Naive thymus-derived CD4-positive, alpha-beta T cell (primary cell): ENCODE measurements at regions of chr9 and their contacts with region 1.

Region 1: DNA sequence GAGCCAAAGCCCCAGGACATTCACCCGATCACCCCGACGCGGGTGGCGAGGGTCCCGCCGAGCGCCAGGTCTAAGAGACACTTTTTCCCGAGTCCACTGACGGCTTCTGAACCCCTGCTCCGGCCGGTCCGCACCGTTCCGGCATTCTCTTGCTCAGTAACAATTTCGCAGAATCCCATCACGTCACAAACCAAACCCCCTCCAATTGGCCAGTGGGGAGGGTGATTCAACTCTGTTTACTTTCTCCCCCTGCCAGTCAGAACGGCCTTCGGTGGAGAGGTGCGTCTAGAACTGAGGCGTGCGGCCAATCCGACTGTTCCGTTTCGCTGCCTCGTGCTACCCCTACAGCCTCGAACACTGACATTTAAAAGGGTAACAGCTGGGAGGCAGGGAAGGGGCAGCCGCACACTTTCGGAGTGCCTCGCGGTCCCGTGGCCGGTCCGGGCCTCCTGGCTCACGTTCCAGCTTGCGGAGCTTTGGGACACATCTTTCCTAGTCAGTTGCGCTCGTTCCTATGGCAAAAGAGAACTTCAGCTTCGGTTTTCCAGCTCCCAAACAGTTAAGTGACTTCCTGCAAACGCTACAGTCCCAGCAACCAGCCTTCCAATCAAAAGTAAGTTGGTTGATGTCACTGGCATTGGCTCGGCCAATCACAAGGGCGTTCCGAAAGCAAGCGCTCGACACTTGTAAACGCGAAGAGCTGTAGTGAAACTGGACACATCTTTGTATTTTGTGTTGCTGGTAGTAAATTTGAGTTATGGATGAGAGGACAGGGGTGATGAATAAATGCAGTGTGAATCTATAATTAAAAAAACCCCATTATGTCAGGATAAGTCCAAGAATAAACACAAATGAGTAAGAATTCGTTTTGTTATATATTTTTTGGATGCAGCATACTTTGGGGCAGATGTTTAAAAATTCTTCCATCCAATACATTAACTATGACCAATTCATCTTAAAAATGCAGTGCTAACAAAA is at the start of gene KLF9:
- DNase-seq: peak; percentile 76 to 97 (median 96)
- ATAC-seq: peak; percentile 89
- H3K4me3 ChIP-seq: peak within 1 kb of the TSS; percentile 42
- H3K4me3 Mint-ChIP-seq: peak within 1 kb of the TSS; percentile 91 to 100 (median 96)
- H3K27ac ChIP-seq: peak within 1 kb of the TSS; percentile 99
- H3K27ac Mint-ChIP-seq: peak within 1 kb of the TSS; percentile 99 to 100 (median 100)
- H3K4me1 ChIP-seq: peaks cover 37 to 39% of the 10 kb centered on the region in 2 donors
- H3K4me1 Mint-ChIP-seq: peaks cover 12 to 63% (median 45%) of the 10 kb centered on the region in 7 donors
- H3K27me3 ChIP-seq: no peaks in the 10 kb centered on the region
- H3K27me3 Mint-ChIP-seq: peaks cover 0 to 3% (median 0%) of the 10 kb centered on the region in 5 donors
- total RNA-seq, gene KLF9: 12.6 to 96.7 (median 23.3) TPM

Region 2: DNA sequence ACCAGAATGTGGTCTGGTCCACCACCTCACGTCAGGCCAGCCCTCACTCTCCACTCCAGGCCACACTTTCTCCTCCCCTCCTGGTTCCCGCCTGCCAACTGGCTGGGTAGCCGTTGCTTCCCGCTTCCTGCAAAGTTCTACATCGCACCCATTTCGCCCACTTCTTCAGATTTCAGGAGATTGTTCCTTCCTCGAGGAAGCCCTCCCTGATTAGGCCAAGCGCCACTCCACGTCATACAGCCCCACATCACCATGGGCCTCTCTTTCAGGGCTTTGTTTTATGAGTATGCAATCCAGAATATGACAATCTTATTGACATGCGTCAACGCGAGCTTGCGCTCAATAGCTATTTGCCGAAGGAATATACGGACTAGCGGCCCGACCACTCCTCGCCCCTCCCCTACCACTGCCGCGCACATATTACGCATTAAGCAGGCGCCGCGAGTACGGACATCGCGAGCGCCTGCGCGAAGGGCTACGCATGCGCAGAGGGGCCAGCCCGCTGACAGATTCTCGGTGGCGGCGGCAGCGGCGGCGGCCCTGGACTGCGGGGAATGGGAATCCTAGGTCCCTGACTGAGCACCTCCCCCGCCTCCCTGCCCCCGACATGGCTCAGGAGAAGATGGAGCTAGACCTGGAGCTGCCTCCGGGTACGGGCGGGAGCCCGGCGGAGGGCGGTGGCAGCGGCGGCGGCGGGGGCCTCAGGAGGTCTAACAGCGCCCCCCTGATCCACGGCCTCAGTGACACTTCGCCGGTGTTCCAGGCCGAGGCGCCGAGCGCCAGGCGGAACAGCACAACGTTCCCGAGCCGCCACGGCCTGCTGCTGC is 1634.3 kb before region 1 on chr9:
- CTCF ChIA-PET with region 1: no interaction called
- POLR2A ChIA-PET with region 1: no interaction called
- intact Hi-C with region 1: loop called in 1 of 2 experiments (anchors 2 kb)
- DNase-seq: peak; percentile 92 to 98 (median 95)
- ATAC-seq: peak; percentile 95
- H3K4me3 ChIP-seq: peak overlapping the region; percentile 88
- H3K4me3 Mint-ChIP-seq: no peak overlapping the region
- H3K27ac ChIP-seq: peak overlapping the region; percentile 90
- H3K27ac Mint-ChIP-seq: no peak overlapping the region
- H3K4me1 ChIP-seq: peaks cover 36 to 49% of the 10 kb centered on the region in 2 donors
- H3K4me1 Mint-ChIP-seq: peaks cover 0 to 8% (median 0%) of the 10 kb centered on the region in 7 donors
- H3K27me3 ChIP-seq: no peaks in the 10 kb centered on the region
- H3K27me3 Mint-ChIP-seq: peaks cover 0 to 6% (median 3%) of the 10 kb centered on the region in 5 donors

Region 3: GRCh38 chr9:69822091-69822750 is 591.9 kb before region 1 on chr9:
- CTCF ChIA-PET with region 1: no interaction called
- POLR2A ChIA-PET with region 1: no interaction called
- intact Hi-C with region 1: loop called in 1 of 2 experiments (anchors 10 kb)
- DNase-seq: no peak
- ATAC-seq: peak; percentile 66
- H3K4me3 ChIP-seq: no peak overlapping the region
- H3K4me3 Mint-ChIP-seq: peak overlapping the region in 1 of 10 donors; percentile 15
- H3K27ac ChIP-seq: no peak overlapping the region
- H3K27ac Mint-ChIP-seq: peak overlapping the region in 3 of 9 donors; percentile 3 to 29 (median 12)
- H3K4me1 ChIP-seq: no peaks in the 10 kb centered on the region
- H3K4me1 Mint-ChIP-seq: peaks cover 12 to 51% (median 25%) of the 10 kb centered on the region in 7 donors
- H3K27me3 ChIP-seq: no peaks in the 10 kb centered on the region
- H3K27me3 Mint-ChIP-seq: peaks cover 16 to 33% (median 28%) of the 10 kb centered on the region in 5 donors

Region 4: GRCh38 chr9:70324963-70325362 is 89.1 kb before region 1 on chr9:
- CTCF ChIA-PET with region 1: no interaction called
- POLR2A ChIA-PET with region 1: no interaction called
- intact Hi-C with region 1: no loop called
- DNase-seq: no peak
- ATAC-seq: no peak
- H3K4me3 ChIP-seq: no peak overlapping the region
- H3K4me3 Mint-ChIP-seq: no peak overlapping the region
- H3K27ac ChIP-seq: no peak overlapping the region
- H3K27ac Mint-ChIP-seq: peak overlapping the region in 1 of 9 donors; percentile 16
- H3K4me1 ChIP-seq: no peaks in the 10 kb centered on the region
- H3K4me1 Mint-ChIP-seq: no peaks in the 10 kb centered on the region
- H3K27me3 ChIP-seq: no peaks in the 10 kb centered on the region
- H3K27me3 Mint-ChIP-seq: no peaks in the 10 kb centered on the region

Region 5: GRCh38 chr9:70352802-70353201 is 61.3 kb before region 1 on chr9:
- CTCF ChIA-PET with region 1: no interaction called
- POLR2A ChIA-PET with region 1: interaction called, 10 read pairs
- intact Hi-C with region 1: loop called (anchors 1 to 2 kb)
- DNase-seq: peak in 6 of 9 donors; percentile 9 to 46 (median 30)
- ATAC-seq: no peak
- H3K4me3 ChIP-seq: no peak overlapping the region
- H3K4me3 Mint-ChIP-seq: no peak overlapping the region
- H3K27ac ChIP-seq: no peak overlapping the region
- H3K27ac Mint-ChIP-seq: peak overlapping the region in 2 of 9 donors; percentile 9 to 16
- H3K4me1 ChIP-seq: no peaks in the 10 kb centered on the region
- H3K4me1 Mint-ChIP-seq: peaks cover 0 to 9% (median 0%) of the 10 kb centered on the region in 7 donors
- H3K27me3 ChIP-seq: no peaks in the 10 kb centered on the region
- H3K27me3 Mint-ChIP-seq: no peaks in the 10 kb centered on the region

Region 6: DNA sequence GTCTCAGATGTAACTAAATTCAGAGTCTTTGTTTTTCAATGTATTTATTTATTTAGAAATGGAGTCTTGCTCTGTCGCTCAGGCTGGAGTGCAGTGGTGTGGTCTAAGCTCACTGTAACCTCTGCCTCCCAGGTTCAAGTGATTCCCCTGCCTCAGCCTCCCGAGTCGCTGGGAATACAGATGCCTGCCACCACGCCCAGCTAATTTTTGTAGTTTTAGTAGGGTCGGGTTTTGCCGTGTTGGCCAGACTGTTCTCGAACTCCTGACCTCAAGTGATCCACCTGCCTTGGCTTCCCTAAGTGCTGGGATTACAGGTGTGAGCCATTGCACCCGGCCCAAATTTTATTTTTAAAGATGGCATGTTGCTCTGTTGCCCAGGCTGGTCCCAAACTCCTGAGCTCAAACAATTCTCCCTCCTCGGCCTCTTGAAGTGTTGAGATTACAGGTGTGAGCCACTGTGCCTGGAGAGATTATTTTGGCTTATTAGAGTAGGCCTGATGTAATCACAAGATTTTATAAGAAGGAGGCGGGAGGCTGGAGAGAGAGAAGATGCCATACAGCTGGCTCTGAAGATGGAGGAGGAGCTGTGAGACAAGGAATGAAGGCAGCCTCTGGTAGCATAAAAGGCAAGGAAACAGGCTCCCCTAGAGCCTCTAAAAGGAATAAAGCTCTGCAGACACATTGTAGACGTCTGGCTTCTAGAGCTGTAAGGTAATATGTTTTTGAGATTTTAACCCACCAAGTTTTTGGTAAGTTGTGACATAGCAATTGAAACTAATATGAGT is 13.3 kb after region 1 on chr9:
- CTCF ChIA-PET with region 1: no interaction called
- POLR2A ChIA-PET with region 1: interaction called, 138 read pairs
- intact Hi-C with region 1: no loop called
- DNase-seq: no peak
- ATAC-seq: peak; percentile 32
- H3K4me3 ChIP-seq: no peak overlapping the region
- H3K4me3 Mint-ChIP-seq: no peak overlapping the region
- H3K27ac ChIP-seq: no peak overlapping the region
- H3K27ac Mint-ChIP-seq: no peak overlapping the region
- H3K4me1 ChIP-seq: peaks cover under 1% of the 10 kb centered on the region in 2 donors
- H3K4me1 Mint-ChIP-seq: peaks cover 7 to 20% (median 14%) of the 10 kb centered on the region in 7 donors
- H3K27me3 ChIP-seq: no peaks in the 10 kb centered on the region
- H3K27me3 Mint-ChIP-seq: peaks cover 0 to 5% (median 0%) of the 10 kb centered on the region in 5 donors

Region 7: GRCh38 chr9:70602321-70603019 is 188.4 kb after region 1 on chr9:
- CTCF ChIA-PET with region 1: interaction called, 9 read pairs
- POLR2A ChIA-PET with region 1: interaction called, 10 read pairs
- intact Hi-C with region 1: loop called (anchors 1 kb)
- DNase-seq: peak in 7 of 9 donors; percentile 27 to 68 (median 52)
- ATAC-seq: peak; percentile 84
- H3K4me3 ChIP-seq: no peak overlapping the region
- H3K4me3 Mint-ChIP-seq: no peak overlapping the region
- H3K27ac ChIP-seq: no peak overlapping the region
- H3K27ac Mint-ChIP-seq: peak overlapping the region in 3 of 9 donors; percentile 32 to 79 (median 55)
- H3K4me1 ChIP-seq: no peaks in the 10 kb centered on the region
- H3K4me1 Mint-ChIP-seq: peaks cover 0 to 19% (median 5%) of the 10 kb centered on the region in 7 donors
- H3K27me3 ChIP-seq: no peaks in the 10 kb centered on the region
- H3K27me3 Mint-ChIP-seq: no peaks in the 10 kb centered on the region

Region 8: DNA sequence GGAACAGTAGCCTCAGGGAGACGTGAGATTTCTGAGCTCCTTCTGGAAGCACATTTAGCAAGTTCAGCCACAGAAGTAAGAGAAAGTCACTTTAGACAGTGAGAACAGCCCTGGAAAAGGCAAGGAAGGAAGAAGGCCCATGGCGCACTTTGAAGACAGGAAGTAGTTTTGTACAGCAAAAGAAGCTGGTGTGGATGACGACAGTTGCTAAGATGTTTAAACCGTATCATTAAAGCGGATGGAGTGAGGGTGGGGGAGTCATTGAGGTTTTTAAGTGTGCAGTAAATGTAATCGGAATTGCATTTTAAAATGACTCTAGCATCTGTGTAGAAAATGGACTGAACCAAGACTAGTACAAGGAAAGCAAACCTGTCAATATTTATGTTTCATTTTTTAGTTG is 722.6 kb after region 1 on chr9:
- CTCF ChIA-PET with region 1: no interaction called
- POLR2A ChIA-PET with region 1: no interaction called
- intact Hi-C with region 1: no loop called
- DNase-seq: no peak
- ATAC-seq: no peak
- H3K4me3 ChIP-seq: no peak overlapping the region
- H3K4me3 Mint-ChIP-seq: no peak overlapping the region
- H3K27ac ChIP-seq: no peak overlapping the region
- H3K27ac Mint-ChIP-seq: no peak overlapping the region
- H3K4me1 ChIP-seq: no peaks in the 10 kb centered on the region
- H3K4me1 Mint-ChIP-seq: no peaks in the 10 kb centered on the region
- H3K27me3 ChIP-seq: no peaks in the 10 kb centered on the region
- H3K27me3 Mint-ChIP-seq: peaks cover 0 to 4% (median 0%) of the 10 kb centered on the region in 5 donors

Region 9: DNA sequence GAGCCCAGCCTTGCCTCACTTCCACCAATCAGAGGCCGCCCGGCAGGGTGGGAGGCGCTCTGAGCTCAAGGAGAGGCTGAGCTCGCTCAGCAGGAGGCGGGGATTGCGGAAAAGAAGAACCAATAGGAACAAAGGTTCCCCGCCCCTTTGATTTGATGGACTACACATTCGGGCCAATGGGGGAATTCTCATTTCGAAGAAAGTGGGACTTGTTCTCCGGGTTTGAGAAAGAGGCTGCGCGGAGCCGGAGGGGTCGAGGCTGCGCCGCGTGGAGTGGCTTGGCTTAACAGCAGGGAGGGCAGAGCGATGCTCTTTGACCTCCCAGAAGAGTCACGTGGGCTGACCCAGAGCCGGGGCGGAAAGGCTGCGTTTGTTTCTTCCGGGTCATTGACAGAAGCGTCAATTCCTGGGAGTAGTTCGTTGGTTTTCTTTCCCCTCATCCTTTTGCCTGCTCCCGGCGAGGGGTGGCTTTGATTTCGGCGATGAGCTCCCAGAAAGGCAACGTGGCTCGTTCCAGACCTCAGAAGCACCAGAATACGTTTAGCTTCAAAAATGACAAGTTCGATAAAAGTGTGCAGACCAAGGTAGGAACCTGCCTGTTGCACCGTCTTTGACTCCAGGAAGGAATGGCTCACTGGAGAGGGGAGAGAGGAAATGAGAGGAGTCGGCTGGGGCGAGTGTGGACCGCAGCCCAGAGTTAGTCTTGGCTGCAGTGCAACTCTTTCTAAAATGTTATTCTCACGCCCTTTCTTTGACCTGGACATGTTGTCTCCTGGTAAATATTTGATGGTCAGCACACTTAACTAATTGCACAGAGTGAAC is 1497.4 kb after region 1 on chr9 and contains the start of gene C9orf85:
- CTCF ChIA-PET with region 1: no interaction called
- POLR2A ChIA-PET with region 1: no interaction called
- intact Hi-C with region 1: loop called (anchors 2 kb)
- DNase-seq: peak; percentile 84 to 98 (median 95)
- ATAC-seq: peak; percentile 96
- H3K4me3 ChIP-seq: peak within 1 kb of the TSS; percentile 83
- H3K4me3 Mint-ChIP-seq: peak within 1 kb of the TSS; percentile 95 to 100 (median 100)
- H3K27ac ChIP-seq: peak within 1 kb of the TSS; percentile 74
- H3K27ac Mint-ChIP-seq: peak within 1 kb of the TSS; percentile 90 to 99 (median 95)
- H3K4me1 ChIP-seq: peaks cover 15 to 22% of the 10 kb centered on the region in 2 donors
- H3K4me1 Mint-ChIP-seq: peaks cover 47 to 80% (median 67%) of the 10 kb centered on the region in 7 donors
- H3K27me3 ChIP-seq: peaks cover 0 to 3% of the 10 kb centered on the region in 2 donors
- H3K27me3 Mint-ChIP-seq: no peaks in the 10 kb centered on the region
- total RNA-seq, gene C9orf85: 4.8 to 10.3 (median 8.6) TPM